ENCODE measurements at regions of chr19 and their contacts with region 1.

Region 1: DNA sequence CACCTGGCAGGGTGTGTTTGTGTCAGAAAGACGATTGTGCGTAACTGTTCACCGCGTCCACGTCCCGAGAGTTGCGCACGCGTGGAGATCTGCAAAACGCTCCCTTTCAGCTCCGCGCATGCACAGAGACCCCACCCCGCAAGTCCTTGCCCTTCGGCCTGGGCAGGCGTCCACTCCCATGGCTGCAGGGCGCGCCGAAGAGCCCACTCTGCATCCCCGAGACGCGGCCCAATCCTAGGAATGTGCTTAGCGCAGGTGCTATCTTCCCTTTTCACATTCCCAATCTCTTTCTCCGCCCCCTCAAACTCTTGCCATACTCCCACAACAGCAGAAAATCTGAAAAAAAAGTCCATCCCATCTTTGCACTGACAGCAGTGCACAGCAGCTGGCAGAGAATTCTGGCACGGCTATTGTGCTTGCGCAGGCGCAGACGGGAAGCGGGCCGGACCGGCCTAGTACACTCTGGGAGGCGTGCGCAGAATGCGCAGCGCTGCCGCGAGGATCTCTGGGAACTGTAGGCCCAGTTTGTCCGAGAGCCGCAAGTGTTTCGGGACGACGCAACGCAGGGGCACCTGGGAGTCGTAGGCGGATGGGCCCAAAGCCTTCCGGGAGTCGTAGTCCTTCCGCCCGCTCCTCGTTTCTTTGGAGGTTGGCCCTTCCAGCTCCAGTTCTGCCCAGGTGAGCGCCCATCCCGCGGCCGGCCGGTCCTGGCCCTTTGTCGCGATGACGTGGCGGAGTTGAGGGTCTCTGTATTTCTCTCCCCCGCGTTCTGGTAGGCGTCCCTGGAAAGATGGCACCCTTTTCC is 23.1 kb downstream of the ZNF175 start:
- DNase-seq: peak; percentile 98 to 99 (median 99)
- ATAC-seq: peak; percentile 100
- H3K4me3 ChIP-seq: peak overlapping the region; percentile 51 to 82 (median 70)
- H3K27ac ChIP-seq: peak overlapping the region in 10 of 12 donors; percentile 22 to 70 (median 44)
- H3K4me1 ChIP-seq: peaks cover 0 to 19% (median 12%) of the 10 kb centered on the region in 12 donors
- H3K27me3 ChIP-seq: peaks cover 0 to 20% (median under 1%) of the 10 kb centered on the region in 9 donors
- CTCF ChIP-seq: no peak
- POLR2A ChIP-seq: peak in 1 of 2 donors; percentile 52

Region 2: DNA sequence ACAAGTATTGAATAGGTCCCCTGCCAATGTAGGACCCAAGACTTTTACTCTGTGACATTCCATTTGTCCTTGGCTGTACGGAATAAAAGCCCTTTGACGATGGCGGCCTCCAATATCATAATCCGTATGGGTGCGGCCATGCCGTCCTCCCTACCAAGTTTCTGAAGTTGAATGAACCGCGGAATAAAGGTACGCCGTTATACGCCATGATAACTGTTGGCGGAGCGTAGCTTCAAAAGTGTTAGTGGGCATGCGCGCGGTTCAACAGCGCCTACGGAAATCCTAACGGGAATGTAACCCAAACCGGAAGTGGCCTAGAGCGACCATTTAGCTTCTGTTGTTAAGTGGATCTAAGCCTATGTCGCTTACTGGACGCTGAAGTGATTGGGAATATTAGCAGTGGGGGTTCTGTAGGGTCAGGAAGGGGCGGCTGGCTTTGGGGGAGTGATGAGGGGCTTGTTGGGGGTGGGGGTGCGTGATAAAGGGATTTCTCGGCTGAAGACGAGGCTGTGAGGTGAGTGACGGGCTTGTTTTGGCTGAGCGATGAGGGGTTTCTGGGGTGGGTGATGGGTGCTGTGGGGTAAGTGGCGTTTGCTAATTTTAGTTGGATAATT is 23.1 kb before region 1 on chr19 and contains the start of gene ZNF175:
- intact Hi-C with region 1: loop called in 7 of 10 experiments (anchors 1 to 2 kb)
- DNase-seq: peak; percentile 92 to 97 (median 95)
- ATAC-seq: peak; percentile 99 to 100 (median 100)
- H3K4me3 ChIP-seq: peak within 1 kb of the TSS; percentile 42 to 85 (median 70)
- H3K27ac ChIP-seq: peak within 1 kb of the TSS in 11 of 12 donors; percentile 9 to 78 (median 53)
- H3K4me1 ChIP-seq: peaks cover 0 to 21% (median 15%) of the 10 kb centered on the region in 12 donors
- H3K27me3 ChIP-seq: peaks cover 0 to 18% (median 0%) of the 10 kb centered on the region in 9 donors
- CTCF ChIP-seq: no peak
- POLR2A ChIP-seq: peak in 1 of 2 donors; percentile 53
- total RNA-seq, gene ZNF175: 2.5 to 13.7 (median 8.7) TPM